CD8-positive, alpha-beta T cell (primary cell): ENCODE measurements at regions of chr10 and their contacts with region 1.

Region 1: DNA sequence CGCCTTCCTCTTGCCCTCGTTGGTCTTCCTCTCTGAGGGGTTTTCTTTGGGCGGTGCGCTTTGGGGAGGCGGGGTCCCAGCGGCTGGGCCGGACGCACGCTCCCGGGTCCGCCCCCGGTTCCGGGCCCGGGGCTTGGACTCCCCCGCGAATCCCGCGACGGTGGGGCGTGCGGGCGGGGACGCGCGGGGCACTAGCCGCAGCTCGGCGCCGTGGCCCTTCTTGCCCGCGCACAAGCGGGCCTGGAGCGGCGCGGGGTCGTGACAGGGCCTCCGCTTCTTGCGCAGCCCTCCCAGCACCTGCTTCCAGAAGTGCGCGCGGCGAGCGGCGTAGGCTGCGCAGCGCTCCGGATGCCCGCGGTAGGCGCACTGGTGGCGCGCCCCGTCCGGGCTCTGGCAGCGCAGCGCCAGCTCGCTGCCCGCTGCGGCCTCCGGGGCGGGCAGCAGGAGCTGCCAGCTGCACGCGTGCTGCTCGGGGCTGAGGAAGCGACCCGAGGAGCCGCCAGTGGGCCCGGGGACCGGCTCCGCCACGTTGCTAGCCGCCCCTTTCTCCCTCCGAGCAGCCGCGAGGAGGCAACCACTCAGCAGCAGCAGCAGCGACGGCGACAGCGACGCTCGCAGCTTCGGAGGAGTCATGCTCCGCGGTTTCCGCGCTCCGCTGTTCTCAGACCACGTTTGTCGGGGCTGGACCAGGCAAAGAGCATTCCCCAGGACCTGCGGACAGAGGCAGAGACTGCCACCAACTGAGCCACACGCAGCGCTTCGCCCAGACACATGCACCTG is 759 bp downstream of the FGFBP3 start:
- DNase-seq: peak; percentile 47 to 87 (median 70)
- ATAC-seq: peak; percentile 79
- H3K4me3 ChIP-seq: peak overlapping the region; percentile 51 to 82
- H3K4me3 Mint-ChIP-seq: peak overlapping the region; percentile 88
- H3K27ac ChIP-seq: peak overlapping the region; percentile 39 to 73
- H3K27ac Mint-ChIP-seq: peak overlapping the region; percentile 83
- H3K4me1 ChIP-seq: peaks cover 15% of the 10 kb centered on the region
- H3K4me1 Mint-ChIP-seq: peaks cover 28% of the 10 kb centered on the region
- H3K27me3 ChIP-seq: no peaks in the 10 kb centered on the region
- H3K27me3 Mint-ChIP-seq: peaks cover 3% of the 10 kb centered on the region
- CTCF ChIP-seq: peak; percentile 52

Region 2: DNA sequence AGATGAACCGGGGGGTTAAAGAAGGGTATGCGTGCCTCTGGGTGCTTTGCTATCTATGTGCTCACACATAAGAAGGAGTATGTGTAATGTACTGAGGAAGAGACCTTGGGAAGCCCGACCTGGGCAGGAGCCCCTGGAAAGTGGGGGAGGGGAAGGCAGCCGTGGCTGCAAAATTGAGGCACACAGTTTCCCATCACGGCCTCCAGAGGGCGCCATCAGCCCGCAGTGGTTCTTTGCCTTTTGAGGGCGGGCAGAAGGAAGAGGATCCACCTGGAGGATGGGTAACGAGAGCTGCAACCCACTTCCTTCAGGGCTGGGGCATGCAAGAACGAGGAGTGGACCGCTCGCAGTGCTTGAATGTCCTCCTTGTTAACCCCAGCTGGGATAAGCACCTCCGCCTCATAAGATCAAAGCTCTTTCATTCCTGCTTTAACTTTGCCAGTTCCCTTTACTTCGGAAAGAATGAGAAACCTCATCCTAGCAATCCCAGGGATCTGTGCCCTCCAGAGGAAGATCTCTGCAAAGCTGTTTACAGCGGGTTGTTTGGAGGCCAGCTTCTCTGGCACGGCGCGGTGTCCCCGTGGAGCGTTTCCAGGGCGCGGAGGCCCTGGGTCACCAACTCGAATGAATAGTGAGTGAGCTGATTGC is 610.2 kb before region 1 on chr10:
- CTCF ChIA-PET with region 1: interaction called, 12 read pairs
- POLR2A ChIA-PET with region 1: interaction called, 5 read pairs
- intact Hi-C with region 1: loop called (anchors 1 to 2 kb)
- DNase-seq: peak; percentile 47 to 88 (median 79)
- ATAC-seq: peak; percentile 97
- H3K4me3 ChIP-seq: peak overlapping the region; percentile 23 to 59
- H3K4me3 Mint-ChIP-seq: peak overlapping the region; percentile 73
- H3K27ac ChIP-seq: no peak overlapping the region
- H3K27ac Mint-ChIP-seq: no peak overlapping the region
- H3K4me1 ChIP-seq: peaks cover 4% of the 10 kb centered on the region
- H3K4me1 Mint-ChIP-seq: peaks cover 10% of the 10 kb centered on the region
- H3K27me3 ChIP-seq: no peaks in the 10 kb centered on the region
- H3K27me3 Mint-ChIP-seq: peaks cover 9% of the 10 kb centered on the region
- CTCF ChIP-seq: peak; percentile 92

Region 3: DNA sequence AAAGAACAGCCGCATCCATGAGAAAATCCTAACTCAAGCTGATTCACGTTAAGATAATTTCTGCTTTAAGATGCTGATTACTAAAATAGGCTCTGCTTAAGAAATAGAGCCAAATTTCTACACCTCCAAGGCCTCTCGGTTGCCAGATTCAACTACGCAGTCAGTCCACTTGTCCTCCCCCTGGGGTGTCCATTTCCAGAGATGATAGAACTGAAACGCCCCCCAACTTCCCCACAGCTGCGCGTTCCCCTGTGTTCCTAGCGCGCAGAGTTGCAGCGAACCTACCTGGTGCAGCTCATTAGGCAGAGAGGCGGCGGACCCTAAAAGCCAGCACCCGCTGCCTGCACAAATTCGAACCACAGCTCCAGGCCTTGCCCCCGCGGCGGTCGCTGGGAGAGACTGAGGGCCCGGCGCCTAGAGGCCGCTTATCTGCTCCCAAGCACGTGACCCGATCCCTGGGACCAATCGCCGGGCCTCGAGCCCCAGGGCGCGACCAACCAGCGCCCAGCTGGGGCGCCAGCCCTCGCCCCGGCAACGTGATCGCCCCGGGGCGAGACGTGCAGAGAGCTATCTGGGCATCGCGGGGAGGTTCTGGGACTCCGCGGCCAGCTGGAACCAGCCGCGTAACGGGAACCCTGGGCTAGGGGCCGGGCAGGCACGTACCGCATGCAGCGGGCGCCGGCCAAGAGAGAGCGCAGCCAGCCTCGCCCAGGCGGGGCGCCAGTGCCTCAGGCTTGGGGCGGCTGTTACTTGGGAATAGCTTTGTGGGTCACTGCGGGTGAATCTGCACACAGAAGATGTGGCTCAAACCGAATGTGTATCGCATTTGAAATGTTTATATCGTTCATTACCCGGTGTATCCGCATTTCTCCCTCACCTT is 275.6 kb before region 1 on chr10 and contains the start of gene PPP1R3C:
- CTCF ChIA-PET with region 1: no interaction called
- POLR2A ChIA-PET with region 1: no interaction called
- intact Hi-C with region 1: loop called in 1 of 2 experiments (anchors 5 kb)
- DNase-seq: peak in 6 of 9 experiments; percentile 9 to 47 (median 17)
- ATAC-seq: peak; percentile 46
- H3K4me3 ChIP-seq: peak within 1 kb of the TSS in 1 of 2 experiments; percentile 54
- H3K4me3 Mint-ChIP-seq: peak within 1 kb of the TSS; percentile 69
- H3K27ac ChIP-seq: no peak within 1 kb of the TSS
- H3K27ac Mint-ChIP-seq: no peak within 1 kb of the TSS
- H3K4me1 ChIP-seq: peaks cover 15% of the 10 kb centered on the region
- H3K4me1 Mint-ChIP-seq: peaks cover 9% of the 10 kb centered on the region
- H3K27me3 ChIP-seq: peaks cover 3 to 4% of the 10 kb centered on the region in 2 experiments
- H3K27me3 Mint-ChIP-seq: peaks cover 59% of the 10 kb centered on the region
- CTCF ChIP-seq: no peak
- total RNA-seq, gene PPP1R3C: not detected

Region 4: DNA sequence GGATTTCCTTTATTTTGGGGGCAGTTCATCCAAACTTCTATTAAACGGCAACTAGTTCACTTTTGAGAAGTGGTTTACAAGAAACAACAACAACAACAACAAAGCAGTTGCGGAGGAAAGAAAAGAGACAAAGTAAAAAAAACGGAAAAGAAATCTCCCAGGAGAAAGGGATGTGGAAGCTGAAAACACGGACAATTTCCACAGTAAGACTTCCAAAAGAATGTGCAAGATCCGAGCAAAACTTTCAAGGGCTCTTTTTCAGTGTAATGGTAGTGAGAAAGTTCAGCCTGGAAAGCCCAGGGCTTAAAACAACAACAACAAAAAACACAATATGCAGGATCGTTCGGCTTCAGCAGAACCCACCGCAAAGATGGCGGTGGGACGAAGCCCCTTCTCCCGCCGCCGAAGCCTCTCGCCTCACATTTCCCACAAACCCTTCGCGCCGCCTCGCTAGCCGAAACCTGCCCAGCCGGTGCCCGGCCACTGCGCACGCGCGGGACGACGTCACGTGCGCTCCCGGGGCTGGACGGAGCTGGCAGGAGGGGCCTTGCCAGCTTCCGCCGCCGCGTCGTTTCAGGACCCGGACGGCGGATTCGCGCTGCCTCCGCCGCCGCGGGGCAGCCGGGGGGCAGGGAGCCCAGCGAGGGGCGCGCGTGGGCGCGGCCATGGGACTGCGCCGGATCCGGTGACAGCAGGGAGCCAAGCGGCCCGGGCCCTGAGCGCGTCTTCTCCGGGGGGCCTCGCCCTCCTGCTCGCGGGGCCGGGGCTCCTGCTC is 110.5 kb before region 1 on chr10 and contains the start of gene TNKS2:
- CTCF ChIA-PET with region 1: interaction called, 11 read pairs
- POLR2A ChIA-PET with region 1: interaction called, 26 read pairs
- intact Hi-C with region 1: loop called (anchors 2 to 5 kb)
- DNase-seq: peak; percentile 83 to 96 (median 92)
- ATAC-seq: peak; percentile 69
- H3K4me3 ChIP-seq: peak within 1 kb of the TSS; percentile 81 to 85
- H3K4me3 Mint-ChIP-seq: peak within 1 kb of the TSS; percentile 99
- H3K27ac ChIP-seq: peak within 1 kb of the TSS; percentile 88 to 91
- H3K27ac Mint-ChIP-seq: peak within 1 kb of the TSS; percentile 99
- H3K4me1 ChIP-seq: peaks cover 35% of the 10 kb centered on the region
- H3K4me1 Mint-ChIP-seq: peaks cover 64% of the 10 kb centered on the region
- H3K27me3 ChIP-seq: no peaks in the 10 kb centered on the region
- H3K27me3 Mint-ChIP-seq: no peaks in the 10 kb centered on the region
- CTCF ChIP-seq: no peak
- total RNA-seq, gene TNKS2: 46.4 to 49.4 TPM

Region 5: GRCh38 chr10:91923371-91924211 is 15.1 kb after region 1 on chr10 and contains the start of gene BTAF1:
- CTCF ChIA-PET with region 1: interaction called, 41 read pairs
- POLR2A ChIA-PET with region 1: interaction called, 43 read pairs
- intact Hi-C with region 1: loop called (anchors 1 kb)
- DNase-seq: peak; percentile 82 to 97 (median 93)
- ATAC-seq: peak; percentile 94
- H3K4me3 ChIP-seq: peak within 1 kb of the TSS; percentile 87 to 97
- H3K4me3 Mint-ChIP-seq: peak within 1 kb of the TSS; percentile 99
- H3K27ac ChIP-seq: peak within 1 kb of the TSS; percentile 92 to 97
- H3K27ac Mint-ChIP-seq: peak within 1 kb of the TSS; percentile 98
- H3K4me1 ChIP-seq: peaks cover 36% of the 10 kb centered on the region
- H3K4me1 Mint-ChIP-seq: peaks cover 50% of the 10 kb centered on the region
- H3K27me3 ChIP-seq: peaks cover 0 to 2% of the 10 kb centered on the region in 2 experiments
- H3K27me3 Mint-ChIP-seq: peaks cover 2% of the 10 kb centered on the region
- CTCF ChIP-seq: no peak
- total RNA-seq, gene BTAF1: 88.6 to 90.7 TPM